Sigmoid colon (tissue), 7 donors: ENCODE measurements at regions of chr19 and their contacts with region 1.

Region 1: DNA sequence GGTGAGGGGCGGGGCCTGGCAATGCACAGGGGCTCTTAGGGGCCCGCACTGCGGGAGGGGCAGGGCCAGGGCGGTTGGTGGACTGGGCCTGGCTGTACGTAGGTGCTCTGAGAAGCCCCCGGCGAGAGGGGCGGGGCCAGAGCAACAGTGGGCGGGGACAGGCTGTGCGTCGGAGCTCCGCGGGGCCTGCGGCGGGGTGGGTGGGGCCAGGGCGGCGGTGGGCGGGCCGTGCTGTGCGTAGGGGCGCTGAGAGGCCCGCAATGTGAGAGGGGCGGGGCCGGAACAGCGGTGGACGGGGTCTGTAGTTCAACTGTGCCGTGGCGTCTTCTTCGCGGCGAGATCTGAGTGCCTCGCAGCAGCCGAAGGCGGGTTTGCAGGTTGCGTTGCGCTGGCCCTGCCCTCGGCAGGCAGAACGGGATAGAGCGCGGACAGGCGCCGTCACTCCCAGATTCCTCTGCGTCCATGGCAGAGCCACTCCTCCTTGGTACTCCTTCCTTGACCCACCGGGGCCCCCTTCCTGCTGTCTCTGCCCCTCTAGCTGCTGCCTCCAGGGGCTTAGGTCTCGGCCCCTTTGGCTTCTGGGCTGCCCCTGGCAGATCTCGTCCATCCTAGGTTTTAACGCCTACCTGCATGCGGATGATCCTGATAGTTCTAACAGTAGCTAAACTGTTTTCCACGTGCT is 33.2 kb downstream of the CCNE1 start:
- DNase-seq: peak; percentile 97
- H3K4me3 ChIP-seq: peak overlapping the region; percentile 43 to 86 (median 74)
- H3K27ac ChIP-seq: peak overlapping the region; percentile 87 to 93 (median 90)
- H3K4me1 ChIP-seq: peaks cover 0 to 25% (median 23%) of the 10 kb centered on the region in 4 donors
- H3K27me3 ChIP-seq: no peaks in the 10 kb centered on the region
- CTCF ChIP-seq: no peak
- EP300 ChIP-seq: no peak
- POLR2A ChIP-seq: peak in 1 of 2 donors; percentile 34

Region 2: DNA sequence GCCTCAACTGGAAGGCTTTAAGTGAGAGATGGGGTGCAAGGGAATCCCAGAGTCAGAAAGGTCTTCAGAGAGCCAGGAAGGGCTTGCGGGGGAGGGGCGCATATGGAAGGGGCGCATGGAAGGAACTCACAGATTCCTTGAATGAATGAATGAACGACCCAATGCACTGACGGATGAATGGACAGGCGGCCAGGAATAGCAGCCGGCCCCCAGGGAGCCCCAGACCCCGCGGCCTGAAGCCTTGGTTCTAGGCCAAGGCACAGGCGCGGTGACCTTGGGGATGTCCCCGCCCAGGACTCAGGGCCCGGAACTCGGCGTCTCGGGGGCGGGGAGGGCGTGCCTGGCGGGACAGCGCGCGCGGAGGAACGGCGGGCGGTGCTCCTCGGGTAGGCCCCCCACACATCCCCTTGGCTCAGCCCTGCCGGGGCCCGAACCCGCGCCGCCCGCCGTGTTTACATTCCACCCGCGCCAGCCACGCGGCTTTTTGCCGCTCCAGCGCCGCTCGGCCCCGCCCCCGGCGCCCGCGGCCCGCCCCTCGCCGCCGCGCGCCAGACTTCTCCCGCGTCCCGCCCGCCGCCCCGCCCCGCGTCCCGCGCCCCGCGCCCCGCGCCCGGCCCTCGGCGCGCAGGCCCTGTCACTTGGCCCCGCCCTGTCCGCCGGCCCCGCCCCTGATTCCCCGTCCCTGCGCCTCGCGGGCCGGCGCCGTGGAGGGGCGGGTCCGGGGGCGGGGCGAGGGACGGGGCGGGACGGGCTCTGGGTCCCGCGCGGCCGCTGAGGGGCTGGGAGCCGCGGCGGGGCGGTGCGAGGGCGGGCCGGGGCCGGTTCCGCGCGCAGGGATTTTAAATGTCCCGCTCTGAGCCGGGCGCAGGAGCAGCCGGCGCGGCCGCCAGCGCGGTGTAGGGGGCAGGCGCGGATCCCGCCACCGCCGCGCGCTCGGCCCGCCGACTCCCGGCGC is 33.6 kb before region 1 on chr19 and contains the start of gene CCNE1:
- intact Hi-C with region 1: loop called (anchors 1 kb)
- DNase-seq: peak; percentile 96
- H3K4me3 ChIP-seq: peak within 1 kb of the TSS; percentile 38 to 75 (median 60)
- H3K27ac ChIP-seq: peak within 1 kb of the TSS; percentile 55 to 73 (median 68)
- H3K4me1 ChIP-seq: peaks cover 0 to 15% (median 10%) of the 10 kb centered on the region in 4 donors
- H3K27me3 ChIP-seq: no peaks in the 10 kb centered on the region
- CTCF ChIP-seq: no peak
- EP300 ChIP-seq: no peak
- POLR2A ChIP-seq: no peak
- total RNA-seq, gene CCNE1: 2.3 to 13.8 (median 3.6) TPM

Region 3: GRCh38 chr19:29941828-29942403 is 96.9 kb after region 1 on chr19 and contains the start of gene URI1:
- intact Hi-C with region 1: loop called (anchors 2 kb)
- DNase-seq: peak; percentile 94
- H3K4me3 ChIP-seq: peak within 1 kb of the TSS; percentile 74 to 93 (median 88)
- H3K27ac ChIP-seq: peak within 1 kb of the TSS; percentile 80 to 84 (median 82)
- H3K4me1 ChIP-seq: peaks cover 0 to 44% (median 35%) of the 10 kb centered on the region in 4 donors
- H3K27me3 ChIP-seq: no peaks in the 10 kb centered on the region
- CTCF ChIP-seq: no peak
- EP300 ChIP-seq: no peak
- POLR2A ChIP-seq: no peak
- total RNA-seq, gene URI1: 54.6 to 69.2 (median 60.6) TPM

Region 4: DNA sequence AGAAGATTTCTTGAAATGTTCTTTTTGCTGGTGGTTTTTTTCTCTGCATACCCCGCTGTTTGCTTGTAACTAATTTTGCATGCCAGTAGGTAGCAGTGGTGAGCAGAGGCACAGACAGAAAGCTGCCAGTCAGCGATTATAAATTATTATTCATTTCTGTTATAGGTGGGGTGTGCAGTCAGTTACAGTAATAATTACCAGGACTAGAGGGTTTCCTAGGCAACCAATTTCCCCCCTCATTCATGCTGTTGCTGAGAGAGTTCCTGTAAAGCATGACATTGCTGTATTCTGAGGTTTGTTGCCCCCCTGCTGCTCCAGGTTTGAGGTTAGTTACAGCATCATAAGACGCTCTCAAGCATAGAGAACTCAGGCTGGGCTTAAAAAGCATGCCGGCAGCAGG is 201.5 kb after region 1 on chr19:
- intact Hi-C with region 1: no loop called
- DNase-seq: no peak
- H3K4me3 ChIP-seq: no peak overlapping the region
- H3K27ac ChIP-seq: no peak overlapping the region
- H3K4me1 ChIP-seq: peaks cover 0 to 8% (median 0%) of the 10 kb centered on the region in 4 donors
- H3K27me3 ChIP-seq: no peaks in the 10 kb centered on the region
- CTCF ChIP-seq: peak in 1 of 4 experiments; percentile 8
- EP300 ChIP-seq: no peak
- POLR2A ChIP-seq: no peak